ENCODE measurements at regions of chr2 and their contacts with region 1.

Region 1: DNA sequence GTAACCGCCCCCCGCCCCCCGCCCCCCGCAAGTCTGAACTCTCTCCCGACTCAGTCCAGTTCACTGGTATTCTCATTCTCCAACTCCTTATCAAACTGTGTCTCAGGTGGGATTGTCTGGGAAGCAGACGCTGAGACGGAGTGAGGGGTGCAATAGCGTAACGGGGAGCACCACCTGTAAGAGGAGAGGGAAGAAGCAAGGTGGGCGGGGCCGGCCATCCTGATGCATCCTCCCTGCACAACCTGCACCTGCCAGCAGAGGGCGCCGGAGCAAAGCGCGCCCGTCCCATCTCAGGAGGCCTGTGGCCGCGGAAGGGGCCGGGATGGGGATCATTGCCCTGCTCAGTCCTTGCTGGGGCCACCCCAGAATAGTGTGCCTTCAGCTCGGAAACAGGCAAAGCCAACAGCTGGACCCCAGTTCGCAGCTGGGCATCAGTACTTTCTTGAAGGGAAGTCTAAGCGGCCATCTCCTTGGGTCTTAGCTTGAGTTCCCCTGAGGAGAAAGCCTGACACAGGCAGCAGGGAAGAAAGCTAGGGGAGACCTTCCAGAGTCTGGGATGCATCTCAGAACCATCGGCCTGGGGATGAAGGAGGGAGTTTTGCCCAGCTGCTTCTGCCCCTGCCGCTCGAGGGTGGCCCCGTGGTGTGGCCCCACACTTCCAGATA is 208.0 kb downstream of the TFCP2L1 start:
- DNase-seq: peak; percentile 71 to 82 (median 76)
- ATAC-seq: peak; percentile 65
- H3K4me3 ChIP-seq: no peak overlapping the region
- H3K27ac ChIP-seq: no peak overlapping the region
- H3K4me1 ChIP-seq: peaks cover 13% of the 10 kb centered on the region
- H3K27me3 ChIP-seq: peaks cover 0 to 8% of the 10 kb centered on the region in 2 donors
- CTCF ChIP-seq: peak; percentile 71 to 94 (median 76)
- POLR2A ChIP-seq: no peak

Region 2: DNA sequence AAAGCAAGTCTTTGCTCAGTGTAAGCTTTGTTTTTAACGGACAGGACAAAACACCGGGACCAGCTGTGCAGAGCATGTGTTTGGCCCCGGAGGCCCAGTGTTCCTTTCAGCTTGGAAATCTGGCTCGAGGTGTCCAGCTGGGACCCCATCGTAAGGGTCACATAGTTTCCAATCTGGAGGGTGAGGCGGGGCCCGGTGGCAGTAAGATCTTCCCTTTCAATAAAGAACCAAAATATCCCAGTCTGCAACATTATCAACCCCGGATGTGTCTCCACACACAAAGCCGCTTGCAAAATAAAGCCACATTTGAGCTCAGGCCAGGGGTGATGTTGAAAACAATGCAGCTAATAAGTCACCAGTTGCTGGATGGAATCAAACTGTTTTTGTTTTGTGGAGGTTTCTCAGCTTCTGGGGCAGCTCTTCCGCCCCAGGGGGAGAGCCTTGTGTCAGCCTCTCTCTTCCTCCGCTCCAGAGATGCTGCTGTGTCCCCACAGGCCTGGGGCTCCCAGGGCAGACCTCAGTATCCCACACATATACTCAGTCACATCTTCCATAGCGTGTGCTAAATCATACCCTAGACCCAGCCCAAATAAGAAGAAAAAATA is 479.9 kb before region 1 on chr2:
- intact Hi-C with region 1: loop called (anchors 10 kb)
- DNase-seq: peak; percentile 23 to 55 (median 42)
- ATAC-seq: peak; percentile 65
- H3K4me3 ChIP-seq: no peak overlapping the region
- H3K27ac ChIP-seq: peak overlapping the region in 3 of 4 donors; percentile 18 to 43 (median 34)
- H3K4me1 ChIP-seq: peaks cover 22% of the 10 kb centered on the region
- H3K27me3 ChIP-seq: no peaks in the 10 kb centered on the region
- CTCF ChIP-seq: no peak
- POLR2A ChIP-seq: no peak

Region 3: DNA sequence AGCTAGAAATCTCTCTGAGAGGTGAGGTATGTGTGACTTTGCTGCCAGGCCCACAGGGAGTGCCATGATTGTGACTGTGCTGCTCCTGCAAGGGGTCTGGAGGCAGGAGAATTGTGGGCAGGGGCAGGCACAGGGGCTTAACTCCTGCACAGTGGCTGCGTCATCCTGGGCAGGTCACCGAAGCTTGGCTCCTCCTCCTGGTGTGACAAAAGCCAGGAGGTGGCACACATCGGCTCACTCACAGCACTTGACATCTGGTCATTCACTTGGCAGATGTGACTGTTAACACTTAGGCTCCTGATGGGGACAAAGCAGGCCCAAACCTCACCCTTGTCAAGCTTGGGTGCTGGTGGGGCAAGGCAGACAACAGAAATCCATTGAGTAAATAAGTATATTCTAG is 377.7 kb before region 1 on chr2:
- intact Hi-C with region 1: loop called (anchors 5 kb)
- DNase-seq: no peak
- ATAC-seq: no peak
- H3K4me3 ChIP-seq: no peak overlapping the region
- H3K27ac ChIP-seq: no peak overlapping the region
- H3K4me1 ChIP-seq: no peaks in the 10 kb centered on the region
- H3K27me3 ChIP-seq: peaks cover 0 to 8% of the 10 kb centered on the region in 2 donors
- CTCF ChIP-seq: no peak
- POLR2A ChIP-seq: no peak